PC-3 (cell line): ENCODE measurements at regions of chr14 and their contacts with region 1.

Region 1: DNA sequence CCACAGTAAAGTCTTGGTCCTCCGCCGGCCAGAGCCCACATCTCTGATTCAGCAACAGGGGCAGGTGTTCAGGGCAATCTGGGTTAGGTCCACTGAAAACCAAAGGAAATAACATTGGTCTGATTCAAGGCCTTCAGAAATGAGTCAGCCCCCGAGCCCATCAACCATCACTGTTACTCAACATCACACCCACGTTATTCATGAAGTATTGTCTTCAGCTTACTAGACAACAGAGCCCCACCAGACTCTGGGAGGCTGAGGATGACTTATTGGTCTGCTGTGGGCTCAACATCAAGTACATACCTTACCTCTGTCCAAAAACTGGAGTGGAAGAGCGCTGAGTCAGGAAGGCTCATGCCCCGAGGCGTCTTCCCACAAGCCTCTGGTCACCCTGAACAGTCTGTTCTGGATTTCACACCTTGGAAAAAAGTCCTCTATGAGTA is 97.5 kb downstream of the ZFP36L1 start:
- DNase-seq: peak; percentile 99
- ATAC-seq: peak; percentile 95
- H3K4me3 ChIP-seq: no peak overlapping the region
- H3K27ac ChIP-seq: peak overlapping the region; percentile 90
- H3K4me1 ChIP-seq: peaks cover 28% of the 10 kb centered on the region
- H3K27me3 ChIP-seq: no peaks in the 10 kb centered on the region
- CTCF ChIP-seq: no peak

Region 2: DNA sequence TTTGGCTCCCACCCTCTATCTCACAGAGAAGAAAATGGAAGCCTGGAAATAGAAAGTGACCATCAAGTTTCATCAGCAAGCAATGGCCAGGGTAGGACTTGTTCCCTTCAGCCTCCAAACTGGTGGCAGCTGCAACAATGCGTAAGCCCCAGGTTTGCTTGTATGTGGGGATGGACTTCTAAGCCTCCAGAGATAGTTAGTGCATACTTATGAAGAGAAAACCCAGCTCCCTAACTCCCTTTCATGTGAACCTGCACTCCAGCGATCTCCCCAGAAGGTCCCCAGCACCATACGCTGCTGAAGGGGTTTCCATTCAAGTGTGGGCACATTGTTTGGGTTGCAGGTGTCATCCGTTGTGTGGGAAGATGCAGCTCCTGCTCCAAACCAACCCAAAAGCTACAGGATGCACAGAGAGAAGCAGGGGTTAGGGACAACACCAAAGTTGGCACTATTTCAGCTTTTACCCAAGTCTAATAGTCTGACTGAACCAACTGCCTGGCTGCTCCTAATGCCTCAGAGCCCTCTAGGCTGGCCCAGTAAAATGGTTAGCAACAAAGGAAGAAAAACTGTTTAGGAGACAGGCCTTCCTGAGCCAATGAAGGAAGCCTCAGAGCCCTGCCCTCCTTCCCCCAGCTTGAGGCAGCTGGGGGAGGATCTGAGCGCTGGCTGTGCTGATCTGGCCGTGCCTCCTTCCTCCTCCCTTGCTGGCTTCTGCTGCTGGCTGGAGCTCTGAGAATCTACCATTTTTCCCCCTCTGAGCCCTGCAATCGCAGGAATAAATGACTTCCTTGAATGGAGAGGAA is 85.2 kb after region 1 on chr14:
- CTCF ChIA-PET with region 1: no interaction called
- POLR2A ChIA-PET with region 1: interaction called, 3 read pairs
- intact Hi-C with region 1: loop called (anchors 1 kb)
- DNase-seq: peak; percentile 43
- ATAC-seq: peak; percentile 20
- H3K4me3 ChIP-seq: peak overlapping the region; percentile 32
- H3K27ac ChIP-seq: peak overlapping the region; percentile 80
- H3K4me1 ChIP-seq: peaks cover 60% of the 10 kb centered on the region
- H3K27me3 ChIP-seq: no peaks in the 10 kb centered on the region
- CTCF ChIP-seq: no peak

Region 3: DNA sequence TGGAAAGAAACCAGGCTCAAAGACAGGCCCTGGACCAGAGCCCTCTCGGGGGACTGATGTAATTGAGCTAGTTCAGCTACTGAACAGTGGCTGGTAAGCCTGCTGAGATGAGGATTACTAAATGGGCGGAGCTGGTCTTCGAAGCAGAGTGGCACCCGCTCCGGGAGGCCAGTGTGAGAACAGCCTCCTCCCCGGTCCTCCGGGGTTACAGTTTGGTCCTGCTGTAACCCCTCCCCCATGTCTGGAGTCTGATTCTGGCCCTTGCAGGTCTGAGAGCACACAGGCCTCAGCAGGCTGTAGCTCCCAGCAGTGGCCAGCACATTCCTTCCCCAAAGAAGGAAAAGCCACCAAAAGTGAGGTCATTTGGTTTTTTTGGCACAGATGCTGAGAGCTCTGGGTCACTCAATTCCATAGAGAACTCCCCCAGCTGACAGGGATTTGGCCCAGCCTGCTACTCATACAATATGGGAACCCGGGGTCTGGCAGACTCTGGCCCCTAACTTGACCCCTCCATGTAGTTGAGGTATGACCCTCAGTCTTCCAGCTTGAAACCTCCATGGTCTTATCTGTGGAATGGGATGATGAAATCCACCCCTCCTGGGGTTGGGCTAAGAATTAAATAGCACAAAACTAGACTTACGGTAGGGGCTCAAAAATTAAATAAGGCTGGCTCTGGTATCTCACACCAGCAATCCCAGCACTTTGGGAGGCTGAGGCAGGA is 244.7 kb after region 1 on chr14:
- CTCF ChIA-PET with region 1: no interaction called
- POLR2A ChIA-PET with region 1: no interaction called
- intact Hi-C with region 1: no loop called
- DNase-seq: peak; percentile 68
- ATAC-seq: peak; percentile 53
- H3K4me3 ChIP-seq: no peak overlapping the region
- H3K27ac ChIP-seq: no peak overlapping the region
- H3K4me1 ChIP-seq: peaks cover 44% of the 10 kb centered on the region
- H3K27me3 ChIP-seq: no peaks in the 10 kb centered on the region
- CTCF ChIP-seq: no peak